PC-9 (cell line): ENCODE measurements at regions of chr5 and their contacts with region 1.

Region 1: DNA sequence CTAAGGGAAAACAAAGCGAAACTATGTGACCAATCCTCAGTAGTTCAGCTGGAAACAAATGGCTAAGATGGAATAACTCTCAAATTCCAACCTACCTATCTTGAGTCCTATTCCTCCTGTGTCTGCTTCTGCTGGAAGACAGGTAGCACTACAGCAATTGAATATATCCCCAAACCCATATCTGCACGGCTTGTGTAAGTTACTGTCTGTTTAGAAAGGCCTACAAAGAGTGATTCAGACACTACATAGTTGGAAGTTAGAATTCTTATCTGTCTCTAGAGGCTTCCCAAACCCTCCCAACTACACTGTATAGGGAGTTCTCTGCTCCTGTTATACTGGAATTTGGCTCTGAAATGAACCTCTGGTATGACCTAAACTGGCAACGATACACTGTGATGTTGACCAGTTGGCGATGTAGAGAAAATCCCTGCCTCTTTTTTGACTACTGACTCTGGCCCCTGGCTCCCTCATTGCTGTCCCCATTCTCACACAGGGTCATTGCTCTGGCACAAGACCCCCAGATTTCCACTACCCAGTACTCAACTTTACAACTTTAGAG is 22.6 kb upstream of the NADK2 start:
- DNase-seq: no peak
- H3K4me3 ChIP-seq: no peak overlapping the region
- H3K27ac ChIP-seq: no peak overlapping the region
- H3K4me1 ChIP-seq: no peaks in the 10 kb centered on the region
- H3K27me3 ChIP-seq: no peaks in the 10 kb centered on the region
- CTCF ChIP-seq: no peak

Region 2: GRCh38 chr5:36058776-36059175 is 205.5 kb before region 1 on chr5:
- CTCF ChIA-PET with region 1: interaction called, 14 read pairs
- POLR2A ChIA-PET with region 1: no interaction called
- intact Hi-C with region 1: no loop called
- DNase-seq: no peak
- H3K4me3 ChIP-seq: no peak overlapping the region
- H3K27ac ChIP-seq: no peak overlapping the region
- H3K4me1 ChIP-seq: no peaks in the 10 kb centered on the region; the same call in 1 of the 2 replicates
- H3K27me3 ChIP-seq: peaks cover 21% of the 10 kb centered on the region; the same call in 1 of the 2 replicates
- CTCF ChIP-seq: no peak

Region 3: GRCh38 chr5:36305571-36306326 is 41.5 kb after region 1 on chr5:
- CTCF ChIA-PET with region 1: interaction called, 19 read pairs
- POLR2A ChIA-PET with region 1: no interaction called
- intact Hi-C with region 1: loop called (anchors 1 kb)
- DNase-seq: peak; percentile 48 to 52
- H3K4me3 ChIP-seq: no peak overlapping the region
- H3K27ac ChIP-seq: no peak overlapping the region
- H3K4me1 ChIP-seq: 0 out of 2 replicates have a peak, but pooled peaks cover 4% of the 10 kb centered on the region
- H3K27me3 ChIP-seq: no peaks in the 10 kb centered on the region
- CTCF ChIP-seq: peak; percentile 83

Region 4: DNA sequence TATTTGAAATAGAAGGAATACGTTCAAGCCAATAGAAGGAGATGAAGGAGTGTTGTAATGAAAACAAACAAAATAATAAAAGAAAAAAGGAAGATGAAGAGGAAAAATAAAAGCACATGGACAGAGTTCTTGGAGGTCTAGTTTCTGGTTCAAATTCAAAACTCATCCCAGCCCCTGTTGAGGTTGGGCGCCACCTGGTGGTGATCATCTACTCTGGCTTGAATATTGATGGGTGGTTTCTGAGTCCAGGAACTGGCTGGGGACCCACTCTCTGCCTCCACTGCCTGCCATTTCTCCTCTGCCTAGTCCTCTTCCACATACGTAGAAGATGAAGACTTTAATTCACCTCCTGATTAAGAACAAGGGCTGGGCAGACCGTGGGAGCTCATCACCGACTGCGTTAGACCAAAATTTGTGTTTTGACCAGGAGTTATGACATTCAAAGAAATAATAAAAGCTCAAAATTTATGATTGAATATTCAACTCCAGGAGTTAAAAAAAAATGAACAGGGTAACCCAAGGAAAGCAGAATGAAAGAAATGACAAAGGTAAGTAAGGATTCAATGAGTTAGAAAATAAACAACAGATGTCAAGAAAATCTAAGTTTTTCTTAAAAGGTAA is 243.2 kb after region 1 on chr5:
- CTCF ChIA-PET with region 1: no interaction called
- POLR2A ChIA-PET with region 1: no interaction called
- intact Hi-C with region 1: loop called (anchors 1 kb)
- DNase-seq: peak; percentile 52 to 74
- H3K4me3 ChIP-seq: no peak overlapping the region
- H3K27ac ChIP-seq: no peak overlapping the region
- H3K4me1 ChIP-seq: peaks cover 14% of the 10 kb centered on the region
- H3K27me3 ChIP-seq: no peaks in the 10 kb centered on the region
- CTCF ChIP-seq: peak; percentile 98

Region 5: GRCh38 chr5:36690041-36690961 is 426.0 kb after region 1 on chr5:
- CTCF ChIA-PET with region 1: no interaction called
- POLR2A ChIA-PET with region 1: no interaction called
- intact Hi-C with region 1: loop called (anchors 1 kb)
- DNase-seq: peak; percentile 25 to 56
- H3K4me3 ChIP-seq: no peak overlapping the region
- H3K27ac ChIP-seq: no peak overlapping the region
- H3K4me1 ChIP-seq: peaks cover 5% of the 10 kb centered on the region; the same call in 1 of the 2 replicates
- H3K27me3 ChIP-seq: no peaks in the 10 kb centered on the region
- CTCF ChIP-seq: no peak

Region 6: DNA sequence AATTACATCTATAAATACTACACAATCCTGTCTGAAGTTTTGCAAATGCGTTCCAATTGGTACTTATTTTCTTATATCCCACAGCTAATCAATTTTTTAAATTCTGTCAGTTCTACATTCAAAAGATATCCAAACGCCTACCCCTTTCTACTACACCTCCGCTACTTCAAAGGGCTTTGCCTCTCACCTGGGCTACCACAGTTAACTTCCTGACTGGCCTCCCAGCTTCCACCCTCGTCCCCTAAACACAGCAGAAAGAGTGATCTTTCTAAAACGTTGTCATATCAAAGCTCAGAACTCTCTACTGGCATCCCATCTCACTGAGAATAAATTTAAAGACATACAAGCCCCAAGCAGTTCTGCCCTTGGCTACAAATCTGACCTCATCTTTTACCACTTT is 580.0 kb after region 1 on chr5:
- CTCF ChIA-PET with region 1: interaction called, 20 read pairs
- POLR2A ChIA-PET with region 1: no interaction called
- intact Hi-C with region 1: no loop called
- DNase-seq: no peak
- H3K4me3 ChIP-seq: no peak overlapping the region
- H3K27ac ChIP-seq: no peak overlapping the region
- H3K4me1 ChIP-seq: no peaks in the 10 kb centered on the region
- H3K27me3 ChIP-seq: peaks cover 2% of the 10 kb centered on the region; the same call in 1 of the 2 replicates
- CTCF ChIP-seq: no peak